HEK293 (cell line): ENCODE measurements at regions of chr2 and their contacts with region 1.

Region 1: DNA sequence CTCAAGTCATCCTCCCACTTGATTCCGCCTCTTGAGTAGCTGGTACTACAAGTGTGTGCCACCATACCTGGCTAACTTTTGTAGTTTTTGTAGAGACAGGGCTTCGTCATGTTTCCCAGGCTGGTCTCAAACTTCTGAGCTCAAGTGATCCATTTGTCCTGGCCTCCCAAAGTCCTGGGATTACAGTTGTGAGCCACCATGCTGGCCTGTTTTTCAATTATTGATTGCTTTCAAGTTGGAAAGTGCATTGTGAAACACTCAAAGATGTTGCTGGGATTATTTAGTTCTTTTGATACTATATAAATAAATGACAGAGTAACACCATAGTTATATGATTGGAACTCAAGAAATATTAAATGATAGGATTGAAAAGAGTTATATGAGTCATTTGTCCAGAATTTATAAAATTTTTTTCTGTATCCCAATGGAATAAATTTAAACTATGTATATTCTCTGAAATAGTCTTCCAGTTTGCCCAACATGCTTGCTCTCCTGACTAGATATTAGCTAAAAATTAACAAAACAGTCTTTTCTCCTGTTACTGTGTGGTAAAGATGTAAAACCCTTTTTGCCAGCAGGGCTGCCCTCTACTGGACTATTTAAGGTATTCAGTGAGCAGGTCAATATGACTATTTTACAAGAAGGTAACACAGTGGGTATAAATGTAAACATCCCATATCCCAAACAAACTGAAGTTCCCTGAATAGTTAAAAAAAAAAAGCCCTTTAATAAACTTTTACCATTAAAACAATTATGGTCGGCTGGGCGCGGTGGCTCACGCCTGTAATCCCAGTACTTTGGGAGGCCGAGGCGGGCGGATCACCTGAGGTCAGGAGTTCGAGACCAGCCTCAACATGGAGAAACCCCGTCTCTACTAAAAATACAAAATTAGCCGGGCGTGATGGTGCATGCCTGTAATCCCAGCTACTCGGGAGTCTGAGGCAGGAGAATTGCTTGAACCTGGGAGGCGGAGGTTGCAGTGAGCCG is 42.7 kb downstream of the ACSL3 start:
- H3K4me3 ChIP-seq: no peak overlapping the region
- H3K27ac ChIP-seq: no peak overlapping the region
- H3K4me1 ChIP-seq: 0 out of 2 replicates have a peak, but pooled peaks cover 3% of the 10 kb centered on the region
- CTCF ChIP-seq: no peak

Region 2: DNA sequence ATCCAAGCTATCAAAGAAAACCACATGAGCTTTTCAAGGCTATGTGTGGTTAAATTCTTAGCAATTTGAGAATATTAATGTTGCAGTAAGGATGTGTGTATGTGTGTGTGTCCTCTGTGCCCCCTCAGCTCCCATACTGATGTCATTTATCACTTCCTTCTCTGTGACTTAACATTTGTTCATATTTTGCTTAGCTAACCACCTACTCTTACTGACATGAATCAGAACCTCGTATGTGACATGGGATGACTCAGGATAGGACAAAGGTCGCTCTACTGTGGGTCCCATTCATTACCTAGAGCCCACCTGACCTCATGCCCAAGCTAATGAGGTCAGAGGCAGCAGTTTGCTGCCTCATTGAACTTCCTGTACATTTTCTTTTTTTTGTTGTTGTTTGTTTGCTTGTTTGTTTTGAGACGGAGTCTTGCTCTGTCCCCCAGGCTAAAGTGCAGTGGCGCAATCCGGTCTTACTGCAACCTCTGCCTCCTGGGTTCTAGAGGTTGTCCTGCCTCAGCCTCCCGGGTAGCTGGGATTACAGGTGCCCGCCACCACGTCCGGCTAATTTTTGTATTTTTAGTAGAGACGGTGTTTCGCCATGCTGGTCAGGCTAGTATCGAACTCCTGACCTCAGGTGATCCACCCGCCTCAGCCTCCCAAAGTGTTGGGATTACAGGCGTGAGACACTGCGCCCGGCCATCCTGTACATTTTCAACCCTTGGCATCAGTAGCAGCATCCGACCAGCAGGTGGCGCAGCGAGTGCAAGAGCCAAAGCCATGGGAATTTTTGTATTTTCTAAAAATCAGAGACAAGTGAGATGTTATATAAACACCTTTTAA is 195.6 kb before region 1 on chr2:
- CTCF ChIA-PET with region 1: interaction called, 13 read pairs
- POLR2A ChIA-PET with region 1: interaction called, 4 read pairs
- H3K4me3 ChIP-seq: no peak overlapping the region
- H3K27ac ChIP-seq: no peak overlapping the region
- H3K4me1 ChIP-seq: no peaks in the 10 kb centered on the region
- CTCF ChIP-seq: peak; percentile 79

Region 3: GRCh38 chr2:222783587-222783986 is 119.9 kb before region 1 on chr2:
- CTCF ChIA-PET with region 1: interaction called, 11 read pairs
- POLR2A ChIA-PET with region 1: no interaction called
- H3K4me3 ChIP-seq: no peak overlapping the region
- H3K27ac ChIP-seq: no peak overlapping the region
- H3K4me1 ChIP-seq: no peaks in the 10 kb centered on the region
- CTCF ChIP-seq: no peak

Region 4: DNA sequence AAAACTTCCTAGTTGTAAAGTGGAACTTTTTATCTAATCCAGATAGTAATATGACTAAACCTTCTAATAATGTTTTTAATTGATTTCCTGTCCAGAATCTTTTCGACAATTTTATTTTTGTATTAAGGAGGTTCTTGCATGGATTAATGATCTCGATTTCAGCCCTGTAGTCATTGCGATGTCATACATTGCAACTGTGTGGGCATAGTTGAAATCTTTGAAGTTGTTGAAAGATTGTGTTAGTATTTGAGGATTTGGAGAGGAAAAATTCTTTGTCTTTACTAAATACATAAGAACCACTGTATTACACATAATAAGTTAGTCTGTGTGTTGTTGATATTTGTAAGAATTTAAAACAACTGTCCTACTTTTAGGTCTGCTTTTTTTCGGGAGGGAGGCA is 11.6 kb before region 1 on chr2:
- CTCF ChIA-PET with region 1: interaction called, 13 read pairs
- POLR2A ChIA-PET with region 1: no interaction called
- H3K4me3 ChIP-seq: no peak overlapping the region
- H3K27ac ChIP-seq: no peak overlapping the region
- H3K4me1 ChIP-seq: peaks cover 16% of the 10 kb centered on the region
- CTCF ChIP-seq: no peak

Region 5: GRCh38 chr2:222915092-222915957 is 11.8 kb after region 1 on chr2:
- CTCF ChIA-PET with region 1: interaction called, 14 read pairs
- POLR2A ChIA-PET with region 1: no interaction called
- H3K4me3 ChIP-seq: no peak overlapping the region
- H3K27ac ChIP-seq: no peak overlapping the region
- H3K4me1 ChIP-seq: peaks cover 3% of the 10 kb centered on the region; the same call in 1 of the 2 replicates
- CTCF ChIP-seq: no peak